ENCODE measurements at regions of chr5 and their contacts with region 1.

Region 1: DNA sequence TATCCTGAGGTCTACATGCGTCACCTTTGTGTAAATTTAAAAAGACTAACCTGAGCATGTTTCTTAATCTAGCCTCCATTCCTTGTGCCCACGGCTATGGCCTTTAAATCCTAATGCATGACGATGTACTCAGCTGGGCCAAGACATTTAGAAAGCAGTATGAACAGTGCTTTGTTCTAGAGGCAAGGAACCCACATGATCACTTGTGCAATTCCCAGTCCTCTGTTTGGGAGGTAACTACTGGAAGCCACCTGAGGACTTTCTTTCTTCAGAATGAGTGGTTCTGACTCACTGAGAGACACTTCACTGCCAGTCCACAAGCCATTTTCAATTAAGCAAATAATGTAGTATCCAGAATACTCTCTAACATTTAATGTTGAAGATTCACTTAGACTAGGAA is 181.3 kb downstream of the RAB3C start:
- DNase-seq: no peak
- ATAC-seq: peak; percentile 24
- H3K4me3 Mint-ChIP-seq: no peak overlapping the region
- H3K27ac Mint-ChIP-seq: no peak overlapping the region
- H3K4me1 Mint-ChIP-seq: peaks cover 42% of the 10 kb centered on the region
- H3K27me3 Mint-ChIP-seq: no peaks in the 10 kb centered on the region

Region 2: GRCh38 chr5:58775701-58776262 is 11.6 kb after region 1 on chr5:
- CTCF ChIA-PET with region 1: interaction called, 5 read pairs
- POLR2A ChIA-PET with region 1: no interaction called
- intact Hi-C with region 1: loop called (anchors 1 kb)
- DNase-seq: peak; percentile 46
- ATAC-seq: peak; percentile 92
- H3K4me3 Mint-ChIP-seq: no peak overlapping the region
- H3K27ac Mint-ChIP-seq: no peak overlapping the region
- H3K4me1 Mint-ChIP-seq: peaks cover 19% of the 10 kb centered on the region
- H3K27me3 Mint-ChIP-seq: peaks cover 34% of the 10 kb centered on the region